Mammary epithelial cell (primary cell): ENCODE measurements at regions of chr1 and their contacts with region 1.

Region 1: GRCh38 chr1:113904674-113905434 is at the starts of genes AP4B1 and DCLRE1B:
- DNase-seq: peak; percentile 100
- H3K4me3 ChIP-seq: peak within 1 kb of the TSS; percentile 72 to 87 (median 86)
- H3K27ac ChIP-seq: peak within 1 kb of the TSS; percentile 88
- H3K4me1 ChIP-seq: peaks cover 10% of the 10 kb centered on the region
- H3K27me3 ChIP-seq: no peaks in the 10 kb centered on the region
- CTCF ChIP-seq: peak; percentile 47 to 86
- total RNA-seq, gene AP4B1: 8.8 to 21.4 TPM
- total RNA-seq, gene DCLRE1B: 4.7 to 12.1 TPM

Region 2: GRCh38 chr1:113759333-113760101 is 145.3 kb before region 1 on chr1 and contains the start of gene PHTF1:
- CTCF ChIA-PET with region 1: no interaction called
- dilution Hi-C with region 1: no loop called
- in situ Hi-C with region 1: no loop called
- intact Hi-C with region 1: loop called (anchors 5 kb)
- DNase-seq: peak; percentile 72
- H3K4me3 ChIP-seq: peak within 1 kb of the TSS; percentile 78 to 96 (median 90)
- H3K27ac ChIP-seq: peak within 1 kb of the TSS; percentile 83
- H3K4me1 ChIP-seq: peaks cover 8% of the 10 kb centered on the region
- H3K27me3 ChIP-seq: no peaks in the 10 kb centered on the region
- CTCF ChIP-seq: no peak
- total RNA-seq, gene PHTF1: 16.6 to 21.0 TPM

Region 3: DNA sequence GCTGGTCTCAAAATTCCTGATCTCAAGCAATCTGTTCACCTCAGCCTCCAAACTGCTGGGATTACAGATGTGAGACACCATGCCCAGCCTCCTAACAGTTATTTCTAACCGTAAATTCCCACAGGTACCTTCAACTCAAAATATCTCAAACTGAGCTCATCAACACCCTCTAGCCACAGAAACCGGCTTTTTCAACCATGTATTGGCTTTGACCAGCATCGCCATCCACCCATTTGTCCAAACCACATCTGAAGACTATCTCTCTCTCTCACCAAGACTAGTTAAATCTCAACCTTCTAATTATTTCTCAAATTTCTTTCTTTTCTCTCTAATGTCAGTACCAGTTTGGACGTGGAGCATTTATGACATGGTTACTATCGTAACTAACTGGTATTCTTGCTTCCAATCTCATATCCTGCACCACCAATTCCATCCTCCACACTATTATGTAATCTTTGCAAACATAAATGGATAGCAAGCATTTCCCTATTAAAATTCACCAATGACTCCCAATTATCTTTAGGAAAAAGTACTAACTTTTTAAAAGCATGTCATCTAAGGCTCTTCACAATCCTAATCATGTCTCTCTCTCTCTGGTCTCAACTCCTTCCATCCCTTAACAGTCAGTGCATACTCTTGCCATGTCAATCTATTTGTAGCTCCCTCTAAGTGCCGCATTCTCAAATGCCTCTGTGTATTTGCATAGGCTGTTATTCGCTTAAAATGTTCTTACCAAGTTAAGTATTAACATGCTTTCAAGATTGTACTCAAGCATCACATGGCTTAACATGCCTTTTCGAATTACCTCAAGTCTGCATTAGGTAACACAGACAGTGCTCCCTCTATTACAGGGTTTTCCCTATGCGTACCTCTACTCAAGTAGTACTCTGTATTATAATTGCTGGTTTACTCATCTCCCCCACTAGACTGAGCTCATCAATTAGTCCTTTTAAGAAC is 110.7 kb before region 1 on chr1:
- CTCF ChIA-PET with region 1: no interaction called
- dilution Hi-C with region 1: no loop called
- in situ Hi-C with region 1: no loop called
- intact Hi-C with region 1: no loop called
- DNase-seq: no peak
- H3K4me3 ChIP-seq: no peak overlapping the region
- H3K27ac ChIP-seq: no peak overlapping the region
- H3K4me1 ChIP-seq: no peaks in the 10 kb centered on the region
- H3K27me3 ChIP-seq: no peaks in the 10 kb centered on the region
- CTCF ChIP-seq: no peak

Region 4: DNA sequence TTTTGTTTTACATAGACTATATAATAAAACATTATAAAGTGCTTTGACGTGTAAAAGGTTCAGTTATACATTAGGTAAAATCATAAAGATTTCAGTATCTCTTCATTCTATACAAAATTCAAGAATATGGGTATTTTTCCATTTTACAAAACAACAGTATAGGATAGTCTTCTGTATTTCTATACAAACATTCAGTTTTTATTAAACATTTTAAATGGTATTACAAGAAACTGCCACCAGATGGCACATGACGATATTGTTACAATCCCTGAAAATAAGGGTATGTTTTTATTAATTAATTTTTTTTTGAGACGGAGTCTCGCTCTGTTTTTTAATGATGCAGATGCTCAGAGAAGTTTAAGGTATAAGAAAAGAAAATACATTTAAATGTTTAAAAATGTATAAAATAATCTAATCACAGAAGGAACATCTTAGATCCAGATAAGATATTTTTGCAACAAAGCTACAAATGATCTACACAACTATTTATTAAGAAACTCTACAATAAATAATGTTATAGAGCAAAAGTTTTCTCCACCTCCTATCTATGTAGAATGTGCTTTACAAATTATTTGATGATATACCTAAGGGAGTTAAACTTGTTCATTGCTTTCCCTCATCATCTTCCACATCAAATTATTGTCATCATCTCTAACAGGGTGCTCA is 69.1 kb before region 1 on chr1:
- CTCF ChIA-PET with region 1: no interaction called
- dilution Hi-C with region 1: no loop called
- in situ Hi-C with region 1: loop called (anchors 10 kb)
- intact Hi-C with region 1: loop called (anchors 1 kb)
- DNase-seq: peak; percentile 35
- H3K4me3 ChIP-seq: no peak overlapping the region
- H3K27ac ChIP-seq: no peak overlapping the region
- H3K4me1 ChIP-seq: peaks cover 6% of the 10 kb centered on the region
- H3K27me3 ChIP-seq: no peaks in the 10 kb centered on the region
- CTCF ChIP-seq: peak; percentile 21 to 51

Region 5: GRCh38 chr1:113928941-113929749 is 24.3 kb after region 1 on chr1 and contains the start of gene HIPK1:
- CTCF ChIA-PET with region 1: no interaction called
- dilution Hi-C with region 1: no loop called
- in situ Hi-C with region 1: no loop called
- intact Hi-C with region 1: loop called (anchors 1 kb)
- DNase-seq: peak; percentile 86
- H3K4me3 ChIP-seq: peak within 1 kb of the TSS; percentile 47 to 95 (median 86)
- H3K27ac ChIP-seq: peak within 1 kb of the TSS; percentile 89
- H3K4me1 ChIP-seq: peaks cover 23% of the 10 kb centered on the region
- H3K27me3 ChIP-seq: no peaks in the 10 kb centered on the region
- CTCF ChIP-seq: no peak
- total RNA-seq, gene HIPK1: 29.3 to 38.4 TPM

Region 6: DNA sequence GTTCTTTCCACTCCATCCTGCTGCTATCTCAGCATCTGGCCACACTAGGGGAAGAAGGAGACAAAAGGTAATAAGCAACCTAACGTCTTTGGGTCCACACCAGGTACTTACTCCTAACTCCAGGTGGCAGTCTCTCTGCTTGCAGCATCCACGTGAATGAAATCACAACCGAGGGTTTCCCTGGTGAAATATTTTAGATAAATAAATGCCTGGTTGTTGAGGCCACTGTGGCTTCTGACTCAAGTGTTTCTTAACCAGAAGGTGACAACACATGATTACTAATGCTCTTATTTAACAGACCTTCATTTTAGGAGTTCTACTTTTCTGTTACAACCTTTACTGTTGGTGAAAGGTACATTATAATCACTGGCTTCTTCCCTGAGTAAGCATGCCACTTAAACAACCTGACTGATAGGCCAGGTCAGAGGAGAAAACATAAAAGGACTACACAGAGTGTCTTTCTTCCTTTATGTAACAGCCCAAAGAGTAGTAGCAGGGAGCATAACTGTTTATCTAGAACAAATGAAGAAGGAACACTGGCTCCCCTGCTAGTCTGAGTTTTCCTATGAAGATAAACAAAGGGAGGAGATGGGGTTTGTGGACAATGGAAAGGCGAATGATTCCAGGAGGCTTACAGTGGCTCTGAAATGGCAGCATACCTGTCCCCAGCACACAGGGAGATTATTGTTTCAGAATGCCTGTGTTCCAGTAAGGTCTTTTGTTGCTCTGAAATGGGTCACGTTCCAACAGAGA is 188.9 kb after region 1 on chr1:
- CTCF ChIA-PET with region 1: no interaction called
- dilution Hi-C with region 1: no loop called
- in situ Hi-C with region 1: no loop called
- intact Hi-C with region 1: no loop called
- DNase-seq: peak; percentile 86
- H3K4me3 ChIP-seq: no peak overlapping the region
- H3K27ac ChIP-seq: peak overlapping the region; percentile 36
- H3K4me1 ChIP-seq: peaks cover 34% of the 10 kb centered on the region
- H3K27me3 ChIP-seq: no peaks in the 10 kb centered on the region
- CTCF ChIP-seq: peak; percentile 38 to 70

Region 7: DNA sequence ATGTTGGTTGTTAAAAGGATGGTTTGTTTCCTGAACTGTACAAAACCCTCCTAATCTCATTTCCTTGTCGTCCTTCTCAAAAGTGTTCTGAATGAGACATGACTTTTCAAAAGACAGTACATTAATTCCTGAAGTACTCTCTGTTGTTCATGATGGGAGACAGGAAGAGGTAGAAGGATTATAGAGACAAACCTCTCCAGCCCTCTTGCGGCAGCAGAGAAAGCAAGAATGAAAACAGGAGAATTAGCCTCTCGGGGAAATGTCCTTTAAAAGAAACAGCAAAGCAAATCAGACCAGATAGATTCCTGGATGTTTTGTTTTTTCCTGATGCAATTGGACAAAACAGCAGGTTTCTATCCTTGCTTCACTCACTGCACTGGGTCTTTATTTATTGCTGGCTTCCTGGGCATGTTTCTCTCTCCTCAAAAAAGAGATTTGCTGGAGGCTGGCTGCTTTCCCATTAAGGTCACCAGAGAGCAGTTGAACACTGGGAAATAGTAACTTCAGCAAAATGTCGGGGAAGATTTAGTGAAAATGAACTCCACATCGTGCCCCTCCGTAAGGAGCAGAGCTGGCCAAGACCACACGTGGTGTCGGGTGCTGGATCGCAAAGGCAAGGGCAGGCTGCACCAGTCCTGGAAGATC is 394.6 kb after region 1 on chr1:
- CTCF ChIA-PET with region 1: no interaction called
- dilution Hi-C with region 1: no loop called
- in situ Hi-C with region 1: no loop called
- intact Hi-C with region 1: no loop called
- DNase-seq: no peak
- H3K4me3 ChIP-seq: no peak overlapping the region
- H3K27ac ChIP-seq: no peak overlapping the region
- H3K4me1 ChIP-seq: no peaks in the 10 kb centered on the region
- H3K27me3 ChIP-seq: no peaks in the 10 kb centered on the region
- CTCF ChIP-seq: no peak